ENCODE measurements at regions of chr15 and their contacts with region 1.

Region 1: GRCh38 chr15:91706322-91707032 is 147.0 kb upstream of the SLCO3A1 start:
- DNase-seq: no peak
- H3K4me3 ChIP-seq: no peak overlapping the region
- H3K27me3 ChIP-seq: no peaks in the 10 kb centered on the region
- CTCF ChIP-seq: peak; percentile 77

Region 2: GRCh38 chr15:91942676-91943576 is 236.4 kb after region 1 on chr15:
- CTCF ChIA-PET with region 1: interaction called, 11 read pairs
- POLR2A ChIA-PET with region 1: no interaction called
- DNase-seq: peak; percentile 78
- H3K4me3 ChIP-seq: no peak overlapping the region
- H3K27me3 ChIP-seq: no peaks in the 10 kb centered on the region
- CTCF ChIP-seq: no peak

Measured in BJ (cell line).